CD4-positive, alpha-beta T cell (primary cell): ENCODE measurements at regions of chr5 and their contacts with region 1.

Region 1: DNA sequence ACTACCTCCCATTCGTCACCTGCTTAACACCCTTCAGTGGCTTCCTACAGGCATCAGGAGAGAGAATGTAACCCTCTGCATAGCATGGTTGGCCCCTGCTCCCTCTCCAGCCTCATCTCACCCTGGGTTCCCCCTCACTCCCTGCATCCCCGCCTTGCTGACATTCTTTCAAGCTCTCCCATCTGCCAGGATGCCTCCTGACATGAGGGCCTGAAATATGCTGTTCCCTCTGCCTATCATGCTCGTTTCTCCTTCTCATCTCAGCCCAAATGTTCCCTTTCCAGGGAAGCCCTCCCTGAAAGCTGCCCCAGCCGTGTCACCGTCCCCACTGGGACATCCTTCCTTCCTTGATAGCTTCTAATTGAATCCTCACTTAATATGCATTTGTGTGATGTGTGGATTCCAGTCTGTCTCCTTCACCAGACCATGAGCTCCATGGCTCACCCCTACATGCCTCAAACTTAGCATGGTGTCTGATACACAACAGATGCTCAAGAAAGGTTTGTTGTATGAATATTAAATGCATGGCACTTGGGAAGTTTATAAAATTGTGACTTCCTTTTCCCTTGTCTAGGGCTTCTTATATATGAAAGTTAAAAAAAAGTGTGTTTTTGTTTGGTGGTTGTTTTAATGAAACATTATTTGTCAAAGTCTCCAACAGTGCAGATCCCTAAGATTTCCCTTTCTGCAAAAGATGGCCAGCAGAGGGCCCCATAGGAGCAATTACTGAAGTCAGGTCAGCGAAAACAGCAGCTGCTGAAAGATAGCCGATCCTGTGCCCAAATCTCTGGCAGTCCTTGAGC is 7.3 kb upstream of the C5orf58 start:
- DNase-seq: peak; percentile 63 to 88 (median 75)
- ATAC-seq: peak; percentile 66
- H3K4me3 ChIP-seq: no peak overlapping the region
- H3K4me3 Mint-ChIP-seq: no peak overlapping the region
- H3K27ac ChIP-seq: no peak overlapping the region
- H3K27ac Mint-ChIP-seq: no peak overlapping the region
- H3K4me1 ChIP-seq: peaks cover 4% of the 10 kb centered on the region
- H3K4me1 Mint-ChIP-seq: peaks cover 4% of the 10 kb centered on the region
- H3K27me3 ChIP-seq: no peaks in the 10 kb centered on the region
- H3K27me3 Mint-ChIP-seq: no peaks in the 10 kb centered on the region
- CTCF ChIP-seq: peak; percentile 93

Region 2: GRCh38 chr5:170238456-170239196 is 13.1 kb after region 1 on chr5:
- CTCF ChIA-PET with region 1: interaction called, 10 read pairs
- POLR2A ChIA-PET with region 1: interaction called, 3 read pairs
- intact Hi-C with region 1: no loop called
- DNase-seq: no peak
- ATAC-seq: no peak
- H3K4me3 ChIP-seq: no peak overlapping the region
- H3K4me3 Mint-ChIP-seq: no peak overlapping the region
- H3K27ac ChIP-seq: no peak overlapping the region
- H3K27ac Mint-ChIP-seq: peak overlapping the region; percentile 1
- H3K4me1 ChIP-seq: no peaks in the 10 kb centered on the region
- H3K4me1 Mint-ChIP-seq: peaks cover 5% of the 10 kb centered on the region
- H3K27me3 ChIP-seq: no peaks in the 10 kb centered on the region
- H3K27me3 Mint-ChIP-seq: no peaks in the 10 kb centered on the region
- CTCF ChIP-seq: no peak

Region 3: DNA sequence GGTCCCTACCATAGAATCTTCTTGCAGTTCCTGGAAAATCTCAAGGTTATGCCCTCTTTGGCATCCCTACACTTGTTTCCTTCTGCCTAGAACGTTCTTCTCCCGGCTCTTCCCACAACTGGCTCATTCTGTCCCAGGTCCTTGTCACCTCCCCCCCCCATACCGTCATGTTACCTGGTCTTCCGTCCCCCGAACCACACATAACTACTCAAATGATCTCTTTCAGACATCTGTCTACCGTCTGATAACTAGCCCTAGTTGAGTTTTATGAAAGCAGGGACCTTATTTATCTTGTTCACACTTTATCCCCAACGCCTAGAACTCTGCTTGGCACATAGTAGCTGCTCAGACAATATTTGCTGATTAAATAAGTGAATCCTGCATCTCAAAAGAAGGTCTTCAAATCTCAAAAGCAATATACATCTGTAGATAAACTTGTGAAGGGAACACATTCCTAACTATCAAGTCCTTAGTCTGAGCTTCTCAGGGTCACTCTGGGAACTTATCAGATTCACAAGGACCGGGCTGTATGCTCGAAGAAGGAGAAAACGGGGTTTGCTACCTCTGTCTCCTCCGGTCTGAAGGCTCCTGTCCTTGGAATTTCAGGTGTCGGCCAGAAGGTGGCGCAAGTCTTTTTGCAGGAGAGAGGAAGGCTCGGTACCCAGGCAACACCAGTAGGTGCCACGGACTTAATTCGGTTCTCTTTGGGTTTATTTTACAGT is 42.1 kb after region 1 on chr5:
- CTCF ChIA-PET with region 1: interaction called, 30 read pairs
- POLR2A ChIA-PET with region 1: interaction called, 9 read pairs
- intact Hi-C with region 1: loop called (anchors 1 kb)
- DNase-seq: peak; percentile 71 to 93 (median 78)
- ATAC-seq: peak; percentile 75
- H3K4me3 ChIP-seq: peak overlapping the region; percentile 8
- H3K4me3 Mint-ChIP-seq: peak overlapping the region; percentile 70
- H3K27ac ChIP-seq: peak overlapping the region; percentile 77 to 82
- H3K27ac Mint-ChIP-seq: peak overlapping the region; percentile 96
- H3K4me1 ChIP-seq: peaks cover 84% of the 10 kb centered on the region
- H3K4me1 Mint-ChIP-seq: peaks cover 93% of the 10 kb centered on the region
- H3K27me3 ChIP-seq: no peaks in the 10 kb centered on the region
- H3K27me3 Mint-ChIP-seq: no peaks in the 10 kb centered on the region
- CTCF ChIP-seq: peak; percentile 91

Region 4: DNA sequence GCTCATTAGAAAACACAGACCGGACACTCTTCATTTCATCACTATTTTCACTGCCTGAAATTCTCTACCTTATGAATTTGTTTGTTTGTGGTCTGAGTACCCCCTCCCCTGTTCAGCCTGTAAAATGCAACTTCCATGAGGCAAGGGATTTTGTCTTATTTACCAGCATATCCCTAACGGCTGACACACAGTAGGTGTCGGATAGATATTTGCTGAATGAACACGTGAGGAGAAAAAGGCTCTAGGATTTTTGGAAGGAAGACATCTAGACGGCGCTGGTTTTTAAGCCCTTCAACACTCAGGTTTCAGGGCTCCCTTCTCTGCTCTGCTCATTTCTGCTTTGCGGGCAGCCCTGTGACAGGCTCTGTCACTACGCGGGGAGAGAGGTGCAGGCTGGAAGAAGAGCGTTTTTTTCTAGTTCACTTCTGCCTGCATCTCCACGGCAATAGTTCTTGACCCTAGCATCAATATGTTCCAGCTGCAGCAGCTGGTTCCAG is 122.7 kb after region 1 on chr5:
- CTCF ChIA-PET with region 1: interaction called, 11 read pairs
- POLR2A ChIA-PET with region 1: no interaction called
- intact Hi-C with region 1: no loop called
- DNase-seq: peak in 1 of 14 experiments; percentile 32
- ATAC-seq: peak; percentile 24
- H3K4me3 ChIP-seq: no peak overlapping the region
- H3K4me3 Mint-ChIP-seq: no peak overlapping the region
- H3K27ac ChIP-seq: no peak overlapping the region
- H3K27ac Mint-ChIP-seq: no peak overlapping the region
- H3K4me1 ChIP-seq: peaks cover 3% of the 10 kb centered on the region
- H3K4me1 Mint-ChIP-seq: peaks cover 4% of the 10 kb centered on the region
- H3K27me3 ChIP-seq: peaks cover 0 to 4% of the 10 kb centered on the region in 2 experiments
- H3K27me3 Mint-ChIP-seq: peaks cover 38% of the 10 kb centered on the region
- CTCF ChIP-seq: no peak

Region 5: DNA sequence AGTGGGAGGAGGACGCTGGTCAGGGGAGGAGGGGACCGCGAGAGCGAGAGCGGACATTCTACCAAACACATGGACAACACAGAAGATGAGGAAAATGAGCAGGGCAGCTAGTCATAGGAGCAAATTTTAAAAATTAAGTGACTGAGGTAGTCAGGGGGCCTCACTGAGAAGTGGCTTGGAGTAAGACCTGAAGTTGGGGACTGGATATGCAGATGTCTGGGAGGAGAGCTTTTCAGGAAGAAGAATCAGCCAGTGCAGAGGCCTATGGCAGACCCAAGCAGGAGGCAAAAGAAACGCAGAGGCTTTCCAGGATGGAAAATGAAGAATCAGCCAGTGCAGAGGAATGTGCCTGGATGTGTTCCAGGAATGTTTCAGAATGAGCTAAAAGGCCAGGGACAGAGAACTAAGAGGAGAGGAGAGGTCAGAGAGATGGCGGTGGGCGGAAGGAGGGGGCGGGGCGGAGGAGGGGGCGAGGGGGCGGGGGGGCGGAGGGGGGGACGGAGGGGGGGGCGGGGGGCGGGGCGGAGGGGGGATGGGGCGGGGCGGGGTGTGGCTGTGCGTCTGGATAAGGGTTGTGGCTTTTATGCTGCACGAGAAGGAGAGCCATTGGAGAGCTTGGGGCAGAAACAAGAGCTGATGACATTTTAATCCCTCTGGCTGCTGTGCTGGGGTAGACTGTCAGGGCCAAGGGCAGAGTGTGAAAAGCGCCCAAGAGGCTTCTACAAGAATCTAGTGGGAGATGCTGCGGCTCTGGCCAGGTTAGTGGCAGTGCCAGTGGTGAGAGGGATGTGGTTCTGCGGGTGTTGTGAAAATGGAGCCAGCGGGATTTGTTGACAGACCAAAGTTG is 407.9 kb after region 1 on chr5:
- CTCF ChIA-PET with region 1: no interaction called
- POLR2A ChIA-PET with region 1: no interaction called
- intact Hi-C with region 1: loop called in 1 of 2 experiments (anchors 5 kb)
- DNase-seq: peak in 2 of 14 experiments; percentile 29 to 39
- ATAC-seq: peak; percentile 51
- H3K4me3 ChIP-seq: peak overlapping the region; percentile 39
- H3K4me3 Mint-ChIP-seq: peak overlapping the region; percentile 77
- H3K27ac ChIP-seq: no peak overlapping the region
- H3K27ac Mint-ChIP-seq: peak overlapping the region; percentile 38
- H3K4me1 ChIP-seq: peaks cover 18% of the 10 kb centered on the region
- H3K4me1 Mint-ChIP-seq: peaks cover 20% of the 10 kb centered on the region
- H3K27me3 ChIP-seq: peaks cover 0 to 4% of the 10 kb centered on the region in 2 experiments
- H3K27me3 Mint-ChIP-seq: peaks cover 11% of the 10 kb centered on the region
- CTCF ChIP-seq: peak; percentile 64

Region 6: GRCh38 chr5:170907758-170908157 is 682.2 kb after region 1 on chr5:
- CTCF ChIA-PET with region 1: no interaction called
- POLR2A ChIA-PET with region 1: no interaction called
- intact Hi-C with region 1: no loop called
- DNase-seq: no peak
- ATAC-seq: no peak
- H3K4me3 ChIP-seq: no peak overlapping the region
- H3K4me3 Mint-ChIP-seq: no peak overlapping the region
- H3K27ac ChIP-seq: no peak overlapping the region
- H3K27ac Mint-ChIP-seq: no peak overlapping the region
- H3K4me1 ChIP-seq: no peaks in the 10 kb centered on the region
- H3K4me1 Mint-ChIP-seq: no peaks in the 10 kb centered on the region
- H3K27me3 ChIP-seq: no peaks in the 10 kb centered on the region
- H3K27me3 Mint-ChIP-seq: no peaks in the 10 kb centered on the region
- CTCF ChIP-seq: no peak